ENCODE measurements at regions of chr3 and their contacts with region 1.

Region 1: GRCh38 chr3:112464264-112464663 is 35.0 kb downstream of the BTLA start:
- DNase-seq: no peak
- H3K4me3 ChIP-seq: no peak overlapping the region
- CTCF ChIP-seq: no peak
- POLR2A ChIP-seq: no peak

Region 2: GRCh38 chr3:111476701-111477100 is 987.6 kb before region 1 on chr3:
- intact Hi-C with region 1: loop called (anchors 5 kb)
- DNase-seq: no peak
- H3K4me3 ChIP-seq: no peak overlapping the region
- CTCF ChIP-seq: no peak
- POLR2A ChIP-seq: no peak

Region 3: DNA sequence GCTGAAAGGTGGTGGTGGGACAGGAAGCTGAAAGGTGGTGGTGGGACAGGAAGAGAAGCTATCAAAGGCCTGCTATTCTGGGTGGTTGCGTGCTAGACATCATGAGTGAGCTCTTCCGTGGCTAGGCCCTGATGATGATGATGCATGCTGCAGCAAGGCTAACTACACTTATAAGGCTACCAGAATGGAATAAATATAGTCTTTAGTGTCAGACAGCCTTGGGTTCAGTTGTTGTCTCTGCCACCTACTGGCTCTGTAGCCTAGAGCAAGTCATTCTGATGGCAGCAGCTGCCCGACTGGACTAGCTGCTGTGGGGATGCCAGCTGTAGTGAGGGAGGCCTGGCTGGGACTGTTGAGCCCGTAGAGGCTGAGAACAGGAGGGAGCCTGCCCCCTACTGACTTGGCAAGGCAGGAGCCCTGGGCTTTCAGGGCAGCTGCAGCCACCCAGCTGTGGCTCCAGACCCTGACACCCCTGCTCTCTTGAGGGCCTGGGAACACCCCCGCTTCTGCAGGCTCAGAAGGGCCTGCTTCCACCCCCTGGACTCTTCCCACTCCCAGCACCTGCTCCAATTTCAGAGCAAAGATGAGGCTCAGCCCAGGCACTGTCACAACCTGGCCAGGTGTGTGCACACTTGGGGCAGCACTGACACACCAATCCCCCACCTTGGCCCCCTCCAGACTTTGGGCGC is 847.7 kb before region 1 on chr3:
- intact Hi-C with region 1: no loop called
- DNase-seq: no peak
- H3K4me3 ChIP-seq: no peak overlapping the region
- CTCF ChIP-seq: no peak
- POLR2A ChIP-seq: no peak

Region 4: GRCh38 chr3:112364291-112364690 is 100.0 kb before region 1 on chr3:
- intact Hi-C with region 1: no loop called
- DNase-seq: no peak
- H3K4me3 ChIP-seq: no peak overlapping the region
- CTCF ChIP-seq: no peak
- POLR2A ChIP-seq: no peak